Left ventricle myocardium superior (tissue), 1 donor: ENCODE measurements at regions of chr7 and their contacts with region 1.

Region 1: GRCh38 chr7:108497082-108497725 is 28.7 kb downstream of the PNPLA8 start:
- DNase-seq: no peak
- ATAC-seq: no peak

Region 2: GRCh38 chr7:108181073-108181985 is 315.9 kb before region 1 on chr7:
- intact Hi-C with region 1: loop called (anchors 5 kb)
- DNase-seq: no peak
- ATAC-seq: peak; percentile 54

Region 3: DNA sequence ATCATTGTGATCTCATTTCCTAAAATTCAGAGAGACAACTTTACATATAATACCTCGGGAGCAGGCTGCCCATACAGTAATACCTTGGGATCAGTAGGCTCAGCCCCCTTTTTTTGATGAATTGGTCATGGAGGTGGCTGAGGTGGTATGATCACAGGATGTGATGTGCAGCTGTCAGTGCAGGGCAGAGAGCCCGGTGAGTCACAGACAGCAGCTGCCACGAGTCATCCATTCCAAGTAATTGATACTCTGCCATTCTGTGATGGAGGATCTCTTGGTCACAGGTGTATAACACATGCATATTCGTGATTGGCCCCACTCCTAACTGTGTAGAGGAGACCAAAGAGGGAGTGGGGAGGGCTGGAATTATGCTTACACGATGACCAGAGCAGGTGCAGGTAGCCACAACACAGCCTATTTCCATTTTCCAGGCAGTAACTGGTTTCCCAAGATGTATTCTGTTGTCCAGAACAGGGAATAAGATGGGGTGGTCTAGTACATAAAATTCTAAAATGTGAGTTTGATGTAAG is 55.1 kb before region 1 on chr7:
- intact Hi-C with region 1: no loop called
- DNase-seq: no peak
- ATAC-seq: no peak